Left ventricle myocardium superior (tissue), 1 donor: ENCODE measurements at regions of chr12 and their contacts with region 1.

Region 1: GRCh38 chr12:120971299-120972179 is 6.8 kb upstream of the HNF1A start:
- DNase-seq: no peak
- ATAC-seq: peak; percentile 83

Region 2: GRCh38 chr12:120599672-120600552 is 371.6 kb before region 1 on chr12:
- intact Hi-C with region 1: loop called (anchors 10 kb)
- DNase-seq: no peak
- ATAC-seq: no peak

Region 3: GRCh38 chr12:120904197-120904773 is 67.3 kb before region 1 on chr12 and contains the start of gene SPPL3:
- intact Hi-C with region 1: no loop called
- DNase-seq: peak; percentile 97
- ATAC-seq: peak; percentile 93
- total RNA-seq, gene SPPL3: 34.6 TPM